B cell (primary cell): ENCODE measurements at regions of chr9 and their contacts with region 1.

Region 1: DNA sequence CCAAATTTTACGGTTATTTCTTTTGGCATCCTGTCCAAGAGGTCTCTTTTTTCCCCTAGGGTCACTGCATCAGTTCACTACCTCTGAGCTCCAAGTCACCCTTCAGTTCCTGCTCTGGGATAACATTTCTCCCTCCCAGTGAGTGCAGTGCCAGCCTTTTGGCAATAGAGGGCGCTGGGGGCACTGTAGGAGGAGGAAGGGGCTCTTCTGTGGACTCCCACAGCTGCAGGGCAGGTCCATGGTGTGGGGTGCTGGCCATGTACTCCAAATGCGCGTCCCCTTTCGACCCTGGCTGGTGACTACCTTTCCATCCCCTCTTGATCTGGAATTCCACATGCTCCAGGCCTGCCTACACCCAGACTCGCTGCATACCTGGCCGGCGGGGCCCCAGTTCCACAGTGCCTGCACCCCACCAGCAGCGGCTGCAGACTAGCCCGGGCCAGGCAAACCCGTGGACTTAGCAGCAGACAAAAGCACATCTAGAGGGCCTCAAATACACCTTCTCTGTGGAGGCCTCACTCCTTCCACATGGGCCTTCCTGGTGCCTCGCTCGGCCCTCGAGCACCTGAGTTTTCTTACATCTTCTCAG is 20.4 kb upstream of the NINJ1 start:
- DNase-seq: peak; percentile 44
- ATAC-seq: peak; percentile 31
- H3K4me3 ChIP-seq: no peak overlapping the region
- H3K4me3 Mint-ChIP-seq: no peak overlapping the region
- H3K27ac ChIP-seq: no peak overlapping the region
- H3K27ac Mint-ChIP-seq: no peak overlapping the region
- H3K4me1 ChIP-seq: no peaks in the 10 kb centered on the region
- H3K4me1 Mint-ChIP-seq: no peaks in the 10 kb centered on the region
- H3K27me3 ChIP-seq: no peaks in the 10 kb centered on the region
- H3K27me3 Mint-ChIP-seq: no peaks in the 10 kb centered on the region
- CTCF ChIP-seq: peak; percentile 65

Region 2: GRCh38 chr9:91611630-91612029 is 1542.8 kb before region 1 on chr9:
- CTCF ChIA-PET with region 1: no interaction called
- POLR2A ChIA-PET with region 1: no interaction called
- intact Hi-C with region 1: no loop called
- DNase-seq: no peak
- ATAC-seq: no peak
- H3K4me3 ChIP-seq: no peak overlapping the region
- H3K4me3 Mint-ChIP-seq: no peak overlapping the region
- H3K27ac ChIP-seq: no peak overlapping the region
- H3K27ac Mint-ChIP-seq: no peak overlapping the region
- H3K4me1 ChIP-seq: no peaks in the 10 kb centered on the region
- H3K4me1 Mint-ChIP-seq: no peaks in the 10 kb centered on the region
- H3K27me3 ChIP-seq: peaks cover 0 to 2% (median under 1%) of the 10 kb centered on the region in 4 experiments
- H3K27me3 Mint-ChIP-seq: peaks cover 10% of the 10 kb centered on the region
- CTCF ChIP-seq: no peak

Region 3: DNA sequence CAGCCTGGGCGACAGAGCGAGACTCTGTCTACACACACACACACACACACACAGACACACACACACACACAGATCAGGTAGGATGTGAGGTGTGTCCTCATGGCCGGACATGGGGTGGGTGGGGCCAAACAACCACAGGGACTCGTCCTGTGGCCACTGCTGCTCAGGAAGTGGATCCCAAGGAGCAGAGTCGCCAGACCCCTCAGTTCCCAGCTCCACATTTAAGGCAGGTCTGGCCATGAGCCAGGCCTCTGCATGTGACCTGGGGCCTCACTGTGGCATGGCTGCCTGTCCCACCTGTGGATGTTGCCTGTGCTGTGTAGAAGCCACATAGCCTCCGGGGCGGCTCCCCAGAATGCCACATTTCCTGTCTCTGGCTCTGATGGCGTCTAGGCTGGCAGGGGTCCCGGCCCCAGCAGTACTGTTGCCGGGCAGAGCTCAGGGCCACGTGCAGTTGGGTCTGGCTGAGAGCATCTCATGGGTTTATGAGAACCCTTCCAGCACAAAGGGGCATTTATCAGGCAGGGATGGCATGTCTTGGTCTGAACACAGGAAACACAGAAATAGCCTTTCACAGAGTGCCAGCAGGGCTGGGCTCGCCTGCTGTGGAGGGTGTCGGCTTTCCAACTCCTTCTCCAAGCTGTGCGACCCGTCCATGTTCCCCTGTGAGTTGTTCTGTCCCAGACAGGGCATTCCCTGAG is 10.4 kb before region 1 on chr9:
- CTCF ChIA-PET with region 1: interaction called, 10 read pairs
- POLR2A ChIA-PET with region 1: no interaction called
- intact Hi-C with region 1: no loop called
- DNase-seq: peak; percentile 56
- ATAC-seq: peak; percentile 47
- H3K4me3 ChIP-seq: no peak overlapping the region
- H3K4me3 Mint-ChIP-seq: no peak overlapping the region
- H3K27ac ChIP-seq: no peak overlapping the region
- H3K27ac Mint-ChIP-seq: peak overlapping the region; percentile 57
- H3K4me1 ChIP-seq: peaks cover 9 to 26% of the 10 kb centered on the region in 2 donors
- H3K4me1 Mint-ChIP-seq: peaks cover 21% of the 10 kb centered on the region
- H3K27me3 ChIP-seq: peaks cover 0 to 10% (median 0%) of the 10 kb centered on the region in 4 experiments
- H3K27me3 Mint-ChIP-seq: no peaks in the 10 kb centered on the region
- CTCF ChIP-seq: no peak